ENCODE measurements at regions of chr4 and their contacts with region 1.

Region 1: GRCh38 chr4:77921701-77922100 is 59.1 kb downstream of the MRPL1 start:
- DNase-seq: peak; percentile 82
- H3K4me3 ChIP-seq: no peak overlapping the region
- H3K27ac ChIP-seq: peak overlapping the region; percentile 81
- H3K4me1 ChIP-seq: peaks cover 27% of the 10 kb centered on the region
- H3K27me3 ChIP-seq: no peaks in the 10 kb centered on the region
- CTCF ChIP-seq: no peak

Region 2: GRCh38 chr4:77819843-77820648 is 101.7 kb before region 1 on chr4:
- CTCF ChIA-PET with region 1: no interaction called
- dilution Hi-C with region 1: no loop called
- in situ Hi-C with region 1: no loop called
- intact Hi-C with region 1: loop called (anchors 5 kb)
- DNase-seq: peak; percentile 86
- H3K4me3 ChIP-seq: peak overlapping the region; percentile 72 to 90 (median 83)
- H3K27ac ChIP-seq: peak overlapping the region; percentile 93
- H3K4me1 ChIP-seq: peaks cover 15% of the 10 kb centered on the region
- H3K27me3 ChIP-seq: no peaks in the 10 kb centered on the region
- CTCF ChIP-seq: no peak

Region 3: GRCh38 chr4:77881460-77882278 is 40.0 kb before region 1 on chr4:
- CTCF ChIA-PET with region 1: no interaction called
- dilution Hi-C with region 1: no loop called
- in situ Hi-C with region 1: no loop called
- intact Hi-C with region 1: loop called (anchors 5 kb)
- DNase-seq: peak; percentile 14
- H3K4me3 ChIP-seq: no peak overlapping the region
- H3K27ac ChIP-seq: peak overlapping the region; percentile 84
- H3K4me1 ChIP-seq: peaks cover 33% of the 10 kb centered on the region
- H3K27me3 ChIP-seq: no peaks in the 10 kb centered on the region
- CTCF ChIP-seq: no peak

Region 4: GRCh38 chr4:78047366-78047765 is 125.7 kb after region 1 on chr4:
- CTCF ChIA-PET with region 1: no interaction called
- dilution Hi-C with region 1: no loop called
- in situ Hi-C with region 1: no loop called
- intact Hi-C with region 1: no loop called
- DNase-seq: no peak
- H3K4me3 ChIP-seq: no peak overlapping the region
- H3K27ac ChIP-seq: no peak overlapping the region
- H3K4me1 ChIP-seq: no peaks in the 10 kb centered on the region
- H3K27me3 ChIP-seq: no peaks in the 10 kb centered on the region
- CTCF ChIP-seq: no peak

Measured in mammary epithelial cell (primary cell).